T-cell (primary cell): ENCODE measurements at regions of chr2 and their contacts with region 1.

Region 1: GRCh38 chr2:179373816-179374215 is 109.2 kb upstream of the SESTD1 start:
- DNase-seq: no peak
- ATAC-seq: no peak
- H3K4me3 ChIP-seq: no peak overlapping the region
- H3K4me3 Mint-ChIP-seq: no peak overlapping the region
- H3K27ac ChIP-seq: no peak overlapping the region
- H3K27ac Mint-ChIP-seq: no peak overlapping the region
- H3K4me1 ChIP-seq: no peaks in the 10 kb centered on the region
- H3K4me1 Mint-ChIP-seq: no peaks in the 10 kb centered on the region
- H3K27me3 ChIP-seq: no peaks in the 10 kb centered on the region
- H3K27me3 Mint-ChIP-seq: peaks cover 12 to 16% of the 10 kb centered on the region in 2 donors

Region 2: GRCh38 chr2:179532863-179533278 is 159.1 kb after region 1 on chr2:
- CTCF ChIA-PET with region 1: no interaction called
- POLR2A ChIA-PET with region 1: no interaction called
- DNase-seq: no peak
- ATAC-seq: no peak
- H3K4me3 ChIP-seq: no peak overlapping the region
- H3K4me3 Mint-ChIP-seq: no peak overlapping the region
- H3K27ac ChIP-seq: no peak overlapping the region
- H3K27ac Mint-ChIP-seq: no peak overlapping the region
- H3K4me1 ChIP-seq: no peaks in the 10 kb centered on the region
- H3K4me1 Mint-ChIP-seq: no peaks in the 10 kb centered on the region
- H3K27me3 ChIP-seq: no peaks in the 10 kb centered on the region
- H3K27me3 Mint-ChIP-seq: peaks cover 0 to 2% of the 10 kb centered on the region in 2 donors

Region 3: GRCh38 chr2:179917272-179917671 is 543.5 kb after region 1 on chr2:
- CTCF ChIA-PET with region 1: interaction called in 1 of 2 experiments, 11 read pairs
- POLR2A ChIA-PET with region 1: no interaction called
- DNase-seq: no peak
- ATAC-seq: no peak
- H3K4me3 ChIP-seq: no peak overlapping the region
- H3K4me3 Mint-ChIP-seq: no peak overlapping the region
- H3K27ac ChIP-seq: no peak overlapping the region
- H3K27ac Mint-ChIP-seq: no peak overlapping the region
- H3K4me1 ChIP-seq: no peaks in the 10 kb centered on the region
- H3K4me1 Mint-ChIP-seq: no peaks in the 10 kb centered on the region
- H3K27me3 ChIP-seq: no peaks in the 10 kb centered on the region
- H3K27me3 Mint-ChIP-seq: no peaks in the 10 kb centered on the region